ENCODE measurements at regions of chr12 and their contacts with region 1.

Region 1: DNA sequence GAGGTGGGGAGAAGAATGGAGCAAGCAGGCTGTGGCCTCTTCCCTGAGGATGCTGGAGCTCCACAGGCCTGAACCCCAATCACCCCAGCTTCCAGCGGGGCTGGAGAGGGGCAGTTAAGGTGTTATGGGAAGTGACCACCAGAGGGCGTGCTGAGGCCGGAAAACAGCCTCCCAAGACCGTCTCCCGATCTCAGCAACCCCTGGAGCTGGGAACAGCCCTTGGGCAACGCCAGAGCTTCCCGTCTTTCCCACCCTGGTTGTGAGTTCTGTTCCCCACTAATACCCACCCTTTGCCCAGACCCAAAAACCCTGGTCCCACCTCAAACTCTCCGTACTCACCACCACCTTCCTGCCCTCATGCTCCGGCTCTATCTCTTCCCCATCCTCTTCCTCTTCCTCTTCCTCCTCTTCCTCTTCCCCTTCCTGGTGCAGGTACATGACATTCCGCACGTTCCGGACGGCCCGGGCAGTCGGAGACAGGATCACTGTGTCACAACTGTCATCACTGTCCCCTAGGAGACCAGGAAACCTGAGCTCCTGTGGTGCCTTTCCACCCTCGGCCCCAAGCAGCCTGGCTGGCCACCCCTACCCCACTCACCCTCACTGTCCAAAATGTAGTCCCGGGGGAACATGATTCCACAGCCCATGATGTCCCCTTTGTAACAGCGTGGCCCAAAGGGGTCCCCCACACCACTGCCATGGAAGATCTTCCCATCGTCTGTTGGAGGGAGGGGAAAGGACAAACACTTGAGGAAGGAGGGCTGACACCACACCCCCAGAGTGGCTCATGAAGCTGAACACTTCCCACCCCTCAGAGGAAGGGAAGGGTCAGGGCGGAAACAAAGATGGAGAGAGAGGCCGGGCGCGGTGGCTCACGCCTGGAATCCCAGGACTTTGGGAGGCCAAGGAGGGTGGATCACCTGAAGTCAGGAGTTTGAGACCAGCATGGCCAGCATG is 12.9 kb downstream of the SPRYD3 start:
- DNase-seq: peak; percentile 74 to 88 (median 82)
- ATAC-seq: peak; percentile 65
- H3K4me3 ChIP-seq: no peak overlapping the region
- H3K27ac ChIP-seq: peak overlapping the region in 1 of 2 donors; percentile 25
- H3K4me1 ChIP-seq: peaks cover 11 to 48% of the 10 kb centered on the region in 2 donors
- H3K27me3 ChIP-seq: no peaks in the 10 kb centered on the region
- CTCF ChIP-seq: peak; percentile 85 to 94

Region 2: GRCh38 chr12:52865090-52865944 is 200.9 kb before region 1 on chr12:
- intact Hi-C with region 1: no loop called
- DNase-seq: peak in 3 of 4 donors; percentile 62 to 78 (median 69)
- ATAC-seq: peak; percentile 92
- H3K4me3 ChIP-seq: no peak overlapping the region
- H3K27ac ChIP-seq: no peak overlapping the region
- H3K4me1 ChIP-seq: peaks cover 0 to 9% of the 10 kb centered on the region in 2 donors
- H3K27me3 ChIP-seq: no peaks in the 10 kb centered on the region
- CTCF ChIP-seq: peak; percentile 73 to 81

Region 3: GRCh38 chr12:52980693-52981423 is 85.4 kb before region 1 on chr12:
- intact Hi-C with region 1: no loop called
- DNase-seq: peak in 3 of 4 donors; percentile 82 to 94 (median 84)
- ATAC-seq: peak; percentile 98
- H3K4me3 ChIP-seq: no peak overlapping the region
- H3K27ac ChIP-seq: no peak overlapping the region
- H3K4me1 ChIP-seq: no peaks in the 10 kb centered on the region
- H3K27me3 ChIP-seq: peaks cover 0 to 10% of the 10 kb centered on the region in 2 donors
- CTCF ChIP-seq: peak; percentile 96 to 97

Region 4: GRCh38 chr12:53098982-53099651 is 32.9 kb after region 1 on chr12:
- intact Hi-C with region 1: loop called in 1 of 2 experiments (anchors 2 kb)
- DNase-seq: peak; percentile 84 to 95 (median 90)
- ATAC-seq: peak; percentile 72
- H3K4me3 ChIP-seq: no peak overlapping the region
- H3K27ac ChIP-seq: peak overlapping the region; percentile 66 to 70
- H3K4me1 ChIP-seq: peaks cover 11 to 62% of the 10 kb centered on the region in 2 donors
- H3K27me3 ChIP-seq: peaks cover 0 to 34% of the 10 kb centered on the region in 2 donors
- CTCF ChIP-seq: peak; percentile 96

Measured in left lung (tissue), 14 donors.